GM18951 (cell line): ENCODE measurements at regions of chr10 and their contacts with region 1.

Region 1: GRCh38 chr10:2927958-2928840 is 139.1 kb upstream of the PFKP start:
- POLR2A ChIP-seq: no peak

Region 2: DNA sequence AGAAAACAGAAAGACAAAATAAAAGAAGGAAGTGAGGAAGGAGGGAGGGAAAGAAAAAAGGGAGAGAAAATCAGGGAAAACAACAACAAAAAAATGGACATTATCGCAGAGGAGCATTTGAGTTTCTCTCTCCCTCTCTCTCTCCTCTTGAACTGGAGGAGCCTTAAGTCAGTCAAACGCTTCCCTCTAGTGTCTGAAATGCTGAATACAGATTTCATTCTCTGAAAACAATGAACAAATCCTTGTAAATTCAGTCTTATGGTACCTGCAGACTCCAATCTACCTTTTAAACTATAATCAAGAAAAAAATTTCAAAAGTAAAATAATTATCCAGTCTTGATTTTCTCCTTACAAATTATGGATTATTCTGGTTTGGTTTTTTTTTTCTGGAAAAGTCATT is 49.9 kb after region 1 on chr10:
- in situ Hi-C with region 1: loop called (anchors 10 kb)
- POLR2A ChIP-seq: no peak

Region 3: DNA sequence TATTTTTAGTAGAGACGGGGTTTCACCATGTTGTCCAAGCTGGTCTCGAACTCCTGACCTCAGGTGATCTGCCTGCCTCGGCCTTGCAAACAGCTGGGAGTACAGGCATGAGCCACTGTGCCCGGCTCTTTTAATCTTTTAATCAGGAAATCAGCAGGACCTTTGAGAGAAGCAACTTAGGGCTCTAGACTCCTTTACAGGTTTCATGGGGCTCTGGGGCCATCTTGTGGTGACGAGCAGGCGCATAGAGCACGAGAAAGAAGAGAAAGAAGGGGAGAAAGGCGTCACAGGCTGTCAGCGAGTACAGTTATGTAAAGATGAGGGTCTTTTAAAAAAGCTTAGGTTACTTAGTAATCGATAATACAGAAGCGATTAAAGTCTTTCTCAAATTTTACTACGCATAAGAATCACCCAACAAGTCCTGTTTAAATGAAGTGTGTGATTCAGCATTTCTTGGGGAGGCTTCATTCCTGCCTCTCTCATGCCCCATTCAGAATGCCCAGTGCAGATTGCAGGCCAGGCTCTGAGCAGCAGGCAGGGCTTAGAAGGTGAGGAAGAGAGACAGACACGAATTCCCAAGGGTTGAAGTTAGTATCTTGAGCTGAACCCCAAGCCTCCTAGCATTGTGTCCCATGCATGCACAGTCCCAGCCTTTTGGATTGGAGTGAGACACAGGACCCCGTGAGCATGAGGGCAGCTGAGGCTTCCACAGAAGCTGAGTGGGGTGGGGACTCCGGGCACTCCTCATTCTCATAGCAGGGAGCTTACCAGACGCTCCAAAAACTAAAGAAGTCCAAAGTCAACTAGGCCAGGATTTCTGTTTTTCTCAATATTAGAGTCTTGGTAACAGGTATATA is 115.5 kb after region 1 on chr10:
- in situ Hi-C with region 1: loop called (anchors 5 kb)
- POLR2A ChIP-seq: no peak

Region 4: GRCh38 chr10:3239066-3239919 is 311.1 kb after region 1 on chr10:
- in situ Hi-C with region 1: no loop called
- POLR2A ChIP-seq: no peak